H1 (cell line): ENCODE measurements at regions of chr2 and their contacts with region 1.

Region 1: DNA sequence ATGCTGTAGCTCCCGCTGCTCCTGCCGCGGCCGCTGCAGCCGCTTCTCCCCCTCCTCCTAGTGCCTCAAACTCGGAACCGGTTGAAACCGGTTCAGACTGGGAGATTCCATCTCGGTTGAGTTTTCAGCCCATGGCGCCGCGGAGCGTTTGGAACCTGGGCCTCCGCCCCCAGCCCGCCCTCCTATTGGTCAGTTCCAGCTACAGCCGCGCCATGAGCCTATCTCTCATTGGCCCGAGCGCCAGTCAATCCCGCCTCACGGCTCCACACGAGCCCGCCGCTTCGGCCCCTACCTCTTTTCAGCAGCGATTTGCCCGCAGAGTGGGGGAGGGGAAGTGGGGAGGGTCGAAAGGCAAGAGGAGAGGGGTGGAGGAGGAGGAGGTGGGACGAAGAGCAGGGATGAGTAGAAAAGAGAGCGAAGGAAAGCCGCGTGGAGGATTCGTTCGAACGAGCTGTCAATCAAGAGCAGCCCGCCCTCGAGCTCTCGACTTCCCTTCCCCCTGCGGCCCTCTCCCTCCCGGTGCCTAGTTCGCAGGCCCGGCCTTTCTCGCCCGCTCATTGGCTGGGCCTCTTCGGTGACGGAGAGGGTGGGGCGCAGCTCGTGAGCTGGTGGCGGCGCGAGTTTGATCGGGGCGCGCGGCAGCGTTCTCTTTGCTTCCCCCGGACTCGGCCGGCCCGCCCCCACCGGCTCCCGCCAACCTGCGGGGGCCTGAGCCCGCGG is at the start of gene XPO1:
- DNase-seq: peak; percentile 98 to 99
- H3K4me3 ChIP-seq: peak within 1 kb of the TSS; percentile 96 to 99 (median 97)
- H3K27ac ChIP-seq: peak within 1 kb of the TSS; percentile 97
- H3K4me1 ChIP-seq: peaks cover 2 to 6% (median 5%) of the 10 kb centered on the region in 4 experiments; a peak in 4 of 7 replicates
- H3K27me3 ChIP-seq: no peaks in the 10 kb centered on the region
- CTCF ChIP-seq: no peak
- EP300 ChIP-seq: peak in 1 of 2 experiments; percentile 79; a peak in 2 of 3 replicates
- POLR2A ChIP-seq: peak; percentile 38 to 98; a peak in 2 of 3 replicates
- RAD21 ChIP-seq: no peak
- total RNA-seq, gene XPO1: 290 and 296 TPM in 2 replicates

Region 2: DNA sequence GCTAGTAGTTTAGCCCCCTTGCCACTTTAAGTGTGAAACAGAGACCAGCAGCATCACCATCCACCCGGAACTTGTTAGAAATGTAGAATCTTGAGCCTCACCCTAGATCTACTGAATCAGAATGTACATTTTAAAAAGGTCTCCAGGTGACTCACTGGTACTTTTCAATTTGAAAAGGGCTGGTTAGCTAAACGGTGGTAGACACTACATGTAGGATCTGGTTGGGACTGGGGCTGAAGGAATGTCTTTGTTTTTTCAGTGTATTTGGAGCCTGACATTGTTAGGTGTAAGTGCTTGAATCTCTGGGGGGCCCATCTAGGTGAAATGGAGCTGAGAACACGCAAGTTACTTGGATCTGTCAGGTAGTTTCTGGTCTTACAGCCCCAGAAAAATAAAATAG is 43.8 kb after region 1 on chr2:
- CTCF ChIA-PET with region 1: no interaction called
- POLR2A ChIA-PET with region 1: interaction called, 10 read pairs
- DNase-seq: peak in 1 of 2 experiments; percentile 72
- H3K4me3 ChIP-seq: peak overlapping the region in 1 of 4 experiments; percentile 3; a peak in 2 of 8 replicates
- H3K27ac ChIP-seq: peak overlapping the region; percentile 11; the same call in 1 of the 2 replicates
- H3K4me1 ChIP-seq: peaks cover 0 to 13% (median 5%) of the 10 kb centered on the region in 4 experiments; a peak in 4 of 7 replicates
- H3K27me3 ChIP-seq: no peaks in the 10 kb centered on the region
- CTCF ChIP-seq: no peak
- EP300 ChIP-seq: peak in 1 of 2 experiments; percentile 79; a peak in 2 of 3 replicates
- POLR2A ChIP-seq: no peak; a peak in 1 of 3 replicates
- RAD21 ChIP-seq: peak in 1 of 2 experiments; percentile 10; a peak in 1 of 4 replicates

Region 3: DNA sequence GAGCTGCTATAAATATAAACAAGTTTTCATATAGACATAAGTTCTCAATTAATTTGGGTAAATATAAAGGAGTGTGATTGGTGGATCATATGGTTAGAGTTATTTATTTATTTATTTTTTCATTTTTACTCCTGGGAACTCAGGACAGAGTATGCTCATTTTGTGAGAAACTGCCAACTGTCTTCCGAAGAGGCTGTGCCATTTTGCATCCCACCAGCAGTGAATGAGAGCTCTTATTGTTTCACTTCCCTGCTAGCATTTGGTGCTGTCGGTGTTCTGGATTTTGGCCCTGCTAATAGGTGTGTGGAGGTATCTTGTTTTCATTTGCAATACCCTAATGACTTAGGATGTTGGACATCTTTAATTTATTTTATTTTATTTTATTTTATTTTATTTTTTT is 50.2 kb after region 1 on chr2:
- CTCF ChIA-PET with region 1: no interaction called
- POLR2A ChIA-PET with region 1: interaction called, 10 read pairs
- DNase-seq: no peak
- H3K4me3 ChIP-seq: no peak overlapping the region
- H3K27ac ChIP-seq: no peak overlapping the region
- H3K4me1 ChIP-seq: no peaks in the 10 kb centered on the region
- H3K27me3 ChIP-seq: no peaks in the 10 kb centered on the region
- CTCF ChIP-seq: no peak
- EP300 ChIP-seq: no peak
- POLR2A ChIP-seq: no peak
- RAD21 ChIP-seq: no peak

Region 4: DNA sequence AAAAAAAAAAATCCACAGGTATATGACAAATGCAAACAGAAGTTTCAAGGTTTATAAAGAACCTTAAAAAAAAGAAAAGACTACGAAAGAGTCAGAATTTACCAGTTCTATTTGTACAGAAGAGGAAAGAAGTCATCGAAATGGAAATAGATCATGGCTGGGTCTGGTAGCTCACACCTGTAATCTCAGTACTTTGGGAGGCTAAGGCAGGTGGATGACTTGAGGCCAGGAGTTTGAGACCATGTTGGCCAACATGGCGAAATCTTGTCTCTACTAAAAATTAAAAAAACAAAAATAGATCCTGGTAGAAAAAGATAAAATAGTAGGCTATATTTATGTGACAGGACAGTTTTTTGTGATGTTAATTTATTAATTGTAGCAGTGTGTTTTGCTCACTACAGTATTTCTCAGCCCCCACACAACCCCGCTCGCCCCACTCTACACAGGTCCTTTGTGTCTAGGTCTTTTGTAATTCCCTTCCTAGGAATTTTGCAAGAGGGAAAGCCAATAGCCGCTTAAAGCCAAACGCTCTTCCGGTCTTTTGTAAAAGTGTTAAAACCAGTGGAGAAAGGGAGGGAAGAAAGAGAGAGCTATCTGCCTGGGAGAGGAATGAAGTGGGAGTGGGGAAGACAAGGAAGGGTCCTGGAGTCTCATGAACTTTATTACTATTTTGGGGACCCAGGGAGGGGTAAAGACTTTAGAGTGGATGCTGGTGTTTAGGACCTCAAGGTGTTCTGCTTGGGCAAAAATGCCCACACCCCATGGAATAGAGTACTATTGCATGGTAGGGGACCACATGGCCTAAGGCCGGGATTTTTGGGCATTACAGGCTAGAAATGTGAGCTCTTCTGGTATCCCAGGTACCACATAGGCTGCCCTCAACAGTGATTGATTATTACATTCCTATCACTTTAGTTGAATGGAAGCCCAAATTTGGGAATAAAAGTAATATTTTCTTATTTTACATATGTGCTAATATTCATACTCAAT is 59.2 kb after region 1 on chr2:
- CTCF ChIA-PET with region 1: interaction called, 4 read pairs
- POLR2A ChIA-PET with region 1: interaction called, 46 read pairs
- DNase-seq: peak; percentile 41 to 50
- H3K4me3 ChIP-seq: no peak overlapping the region
- H3K27ac ChIP-seq: peak overlapping the region; percentile 55
- H3K4me1 ChIP-seq: peaks cover 0 to 12% (median 5%) of the 10 kb centered on the region in 4 experiments; a peak in 4 of 7 replicates
- H3K27me3 ChIP-seq: no peaks in the 10 kb centered on the region
- CTCF ChIP-seq: no peak
- EP300 ChIP-seq: peak in 1 of 2 experiments; percentile 40; a peak in 1 of 3 replicates
- POLR2A ChIP-seq: 0 out of 3 replicates have a peak, but pooled peaks of 1 of the 2 experiments have one; percentile 18
- RAD21 ChIP-seq: no peak

Region 5: DNA sequence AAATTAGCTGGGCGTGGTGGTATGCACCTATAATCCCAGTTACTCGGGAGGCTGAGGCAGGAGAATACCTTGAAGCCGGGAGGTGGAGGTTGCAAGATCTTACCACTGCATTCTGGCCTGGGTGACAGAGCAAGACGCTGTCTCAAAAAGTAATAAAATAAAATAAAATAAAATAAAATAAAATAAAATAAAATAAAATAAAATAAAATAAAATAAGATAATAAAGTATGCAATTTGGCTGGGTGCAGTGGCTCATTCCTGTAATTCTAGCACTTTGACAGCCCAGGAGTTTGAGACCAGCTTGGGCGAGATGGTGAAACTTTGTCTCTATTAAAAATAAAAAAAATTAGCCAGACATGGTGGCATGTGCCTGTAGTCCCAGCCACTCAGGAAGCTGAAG is 85.4 kb after region 1 on chr2:
- CTCF ChIA-PET with region 1: interaction called, 4 read pairs
- POLR2A ChIA-PET with region 1: interaction called, 11 read pairs
- DNase-seq: no peak
- H3K4me3 ChIP-seq: no peak overlapping the region
- H3K27ac ChIP-seq: no peak overlapping the region
- H3K4me1 ChIP-seq: no peaks in the 10 kb centered on the region
- H3K27me3 ChIP-seq: no peaks in the 10 kb centered on the region
- CTCF ChIP-seq: no peak
- EP300 ChIP-seq: no peak
- POLR2A ChIP-seq: no peak
- RAD21 ChIP-seq: no peak

Region 6: DNA sequence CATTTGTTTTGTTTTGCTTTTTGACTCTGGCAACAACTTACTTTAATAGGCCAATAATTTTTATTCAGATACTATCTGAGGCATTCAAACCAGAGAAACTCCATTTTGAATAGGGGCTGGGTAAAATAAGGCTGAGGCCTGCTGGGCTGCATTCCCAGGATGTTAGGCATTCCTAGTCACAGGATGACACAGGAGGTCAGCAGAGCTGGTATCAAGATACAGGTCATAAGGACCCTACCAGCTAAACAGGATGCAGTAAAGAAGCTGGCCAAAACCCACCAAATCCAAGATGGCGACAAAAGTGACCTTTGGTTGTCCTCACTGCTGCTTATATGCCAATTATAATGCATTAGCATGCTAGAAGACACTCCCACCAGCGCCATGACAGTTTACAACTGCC is 102.0 kb after region 1 on chr2:
- CTCF ChIA-PET with region 1: interaction called, 5 read pairs
- POLR2A ChIA-PET with region 1: interaction called, 29 read pairs
- DNase-seq: no peak
- H3K4me3 ChIP-seq: no peak overlapping the region
- H3K27ac ChIP-seq: no peak overlapping the region
- H3K4me1 ChIP-seq: peaks cover 0 to 10% (median 6%) of the 10 kb centered on the region in 4 experiments; a peak in 3 of 7 replicates
- H3K27me3 ChIP-seq: no peaks in the 10 kb centered on the region
- CTCF ChIP-seq: no peak
- EP300 ChIP-seq: no peak
- POLR2A ChIP-seq: no peak
- RAD21 ChIP-seq: no peak

Region 7: DNA sequence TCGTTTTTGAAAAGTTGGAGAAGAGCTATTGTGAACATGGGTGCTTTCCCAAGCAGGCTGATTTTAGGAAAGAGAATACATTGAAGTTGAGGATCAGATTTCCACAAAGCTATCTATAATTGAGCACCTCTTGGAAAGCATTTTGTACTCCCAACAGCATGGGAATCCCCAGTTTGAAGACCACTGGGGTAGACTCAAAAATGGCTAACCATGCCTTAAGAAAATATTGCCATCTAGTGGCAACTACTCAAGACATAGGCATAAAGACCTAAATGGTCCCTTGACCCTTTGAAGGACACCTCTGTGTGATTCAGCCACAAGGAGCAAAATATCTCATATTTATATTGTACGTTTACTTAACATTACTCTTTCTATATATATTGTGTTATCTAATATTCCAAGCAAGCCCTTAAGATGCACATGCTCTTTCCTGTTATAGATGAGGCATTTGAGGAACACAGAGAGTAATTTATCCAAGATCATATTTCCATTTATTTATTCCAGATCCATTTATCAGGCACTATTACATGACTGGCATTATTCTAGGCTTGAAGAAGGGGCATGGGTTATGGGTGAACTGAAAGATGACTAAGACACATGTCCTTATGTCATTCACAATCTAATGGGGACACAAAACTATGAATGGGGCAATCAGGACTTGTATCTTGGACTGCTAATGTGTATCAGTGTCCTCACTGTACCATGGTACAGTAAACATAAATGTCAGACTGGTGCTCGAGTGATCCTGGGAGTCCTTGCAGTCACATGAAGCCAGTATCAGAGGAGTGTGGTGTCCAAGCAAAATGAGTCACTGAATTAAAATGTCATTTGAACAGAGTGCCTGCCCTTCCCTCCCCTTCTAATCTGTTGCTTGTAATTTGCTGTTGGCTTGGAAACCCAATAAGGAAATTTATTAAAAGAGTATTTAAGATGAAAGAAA is 120.8 kb after region 1 on chr2:
- CTCF ChIA-PET with region 1: interaction called, 10 read pairs
- POLR2A ChIA-PET with region 1: interaction called, 7 read pairs
- DNase-seq: peak in 1 of 2 experiments; percentile 9
- H3K4me3 ChIP-seq: no peak overlapping the region
- H3K27ac ChIP-seq: no peak overlapping the region
- H3K4me1 ChIP-seq: no peaks in the 10 kb centered on the region
- H3K27me3 ChIP-seq: no peaks in the 10 kb centered on the region
- CTCF ChIP-seq: peak in 2 of 3 experiments; percentile 51 to 68; a peak in 3 of 4 replicates
- EP300 ChIP-seq: no peak
- POLR2A ChIP-seq: no peak
- RAD21 ChIP-seq: peak; percentile 86 to 90